ENCODE measurements at regions of chr10 and their contacts with region 1.

Region 1: DNA sequence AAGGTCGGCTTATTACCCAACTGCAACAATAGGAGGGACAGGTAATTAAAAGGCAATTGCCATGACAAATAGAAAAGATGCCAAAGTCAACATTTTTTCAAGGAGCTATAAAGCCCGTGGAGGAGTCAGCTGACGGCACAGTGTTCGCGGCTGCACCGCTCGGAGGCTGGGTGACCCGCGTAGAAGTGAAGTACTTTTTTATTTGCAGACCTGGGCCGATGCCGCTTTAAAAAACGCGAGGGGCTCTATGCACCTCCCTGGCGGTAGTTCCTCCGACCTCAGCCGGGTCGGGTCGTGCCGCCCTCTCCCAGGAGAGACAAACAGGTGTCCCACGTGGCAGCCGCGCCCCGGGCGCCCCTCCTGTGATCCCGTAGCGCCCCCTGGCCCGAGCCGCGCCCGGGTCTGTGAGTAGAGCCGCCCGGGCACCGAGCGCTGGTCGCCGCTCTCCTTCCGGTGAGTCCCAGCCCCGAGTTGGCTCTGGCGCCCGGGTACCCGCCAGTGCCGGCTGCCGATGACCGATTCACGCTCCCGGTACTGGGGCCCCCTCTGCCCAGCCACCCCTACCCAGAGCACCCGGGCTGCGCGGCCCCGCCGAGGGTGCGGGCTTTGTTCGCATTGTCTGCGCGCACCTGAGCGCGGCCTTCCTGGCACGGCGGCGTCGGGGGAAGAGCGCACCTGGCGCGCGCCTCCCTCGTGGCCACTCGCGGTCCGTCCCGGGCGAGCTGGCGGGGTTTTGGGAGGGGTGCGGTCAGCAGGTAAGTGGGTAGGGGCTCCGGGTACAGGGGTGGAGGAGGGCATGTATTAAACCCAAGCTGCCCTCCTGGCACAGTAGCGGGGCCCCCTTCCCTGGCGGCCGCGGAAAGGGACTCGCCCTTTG is at the start of gene VWA2:
- DNase-seq: peak; percentile 62 to 85
- H3K4me3 ChIP-seq: peak within 1 kb of the TSS; percentile 61
- H3K4me3 Mint-ChIP-seq: peak within 1 kb of the TSS; percentile 69
- H3K27ac Mint-ChIP-seq: no peak within 1 kb of the TSS
- H3K4me1 ChIP-seq: peaks cover 4% of the 10 kb centered on the region; the same call in 1 of the 2 replicates
- H3K4me1 Mint-ChIP-seq: no peaks in the 10 kb centered on the region
- H3K27me3 ChIP-seq: no peaks in the 10 kb centered on the region; the same call in 1 of the 2 replicates
- H3K27me3 Mint-ChIP-seq: peaks cover 4% of the 10 kb centered on the region
- CTCF ChIP-seq: peak; percentile 46 to 78
- total RNA-seq, gene VWA2: 1.2 and 1.3 TPM in 2 replicates

Region 2: GRCh38 chr10:114009281-114009996 is 229.9 kb before region 1 on chr10:
- CTCF ChIA-PET with region 1: interaction called, 11 read pairs
- POLR2A ChIA-PET with region 1: no interaction called
- intact Hi-C with region 1: no loop called
- DNase-seq: no peak
- H3K4me3 ChIP-seq: no peak overlapping the region
- H3K4me3 Mint-ChIP-seq: no peak overlapping the region
- H3K27ac Mint-ChIP-seq: no peak overlapping the region
- H3K4me1 ChIP-seq: no peaks in the 10 kb centered on the region
- H3K4me1 Mint-ChIP-seq: no peaks in the 10 kb centered on the region
- H3K27me3 ChIP-seq: no peaks in the 10 kb centered on the region
- H3K27me3 Mint-ChIP-seq: peaks cover 3% of the 10 kb centered on the region
- CTCF ChIP-seq: no peak

Region 3: GRCh38 chr10:114110174-114110972 is 129.0 kb before region 1 on chr10:
- CTCF ChIA-PET with region 1: no interaction called
- POLR2A ChIA-PET with region 1: no interaction called
- intact Hi-C with region 1: loop called (anchors 10 kb)
- DNase-seq: peak in 1 of 2 experiments; percentile 48
- H3K4me3 ChIP-seq: no peak overlapping the region
- H3K4me3 Mint-ChIP-seq: no peak overlapping the region
- H3K27ac Mint-ChIP-seq: no peak overlapping the region
- H3K4me1 ChIP-seq: no peaks in the 10 kb centered on the region
- H3K4me1 Mint-ChIP-seq: no peaks in the 10 kb centered on the region
- H3K27me3 ChIP-seq: no peaks in the 10 kb centered on the region
- H3K27me3 Mint-ChIP-seq: no peaks in the 10 kb centered on the region
- CTCF ChIP-seq: peak; percentile 35 to 52

Region 4: GRCh38 chr10:114173921-114174694 is 65.2 kb before region 1 on chr10 and contains the start of gene CCDC186:
- CTCF ChIA-PET with region 1: interaction called, 3 read pairs
- POLR2A ChIA-PET with region 1: no interaction called
- intact Hi-C with region 1: loop called (anchors 1 kb)
- DNase-seq: peak; percentile 99
- H3K4me3 ChIP-seq: peak within 1 kb of the TSS; percentile 79
- H3K4me3 Mint-ChIP-seq: peak within 1 kb of the TSS; percentile 100
- H3K27ac Mint-ChIP-seq: peak within 1 kb of the TSS; percentile 100
- H3K4me1 ChIP-seq: peaks cover 9% of the 10 kb centered on the region; the same call in 1 of the 2 replicates
- H3K4me1 Mint-ChIP-seq: no peaks in the 10 kb centered on the region
- H3K27me3 ChIP-seq: no peaks in the 10 kb centered on the region
- H3K27me3 Mint-ChIP-seq: no peaks in the 10 kb centered on the region
- CTCF ChIP-seq: no peak
- total RNA-seq, gene CCDC186: 26.3 and 30.4 TPM in 2 replicates